Endothelial cell of umbilical vein (primary cell): ENCODE measurements at regions of chr5 and their contacts with region 1.

Region 1: GRCh38 chr5:136132557-136133221 is at the start of gene SMAD5:
- DNase-seq: peak; percentile 97
- H3K4me3 ChIP-seq: peak within 1 kb of the TSS; percentile 72 to 96 (median 83)
- H3K27ac ChIP-seq: peak within 1 kb of the TSS; percentile 78
- H3K4me1 ChIP-seq: peaks cover 15% of the 10 kb centered on the region
- H3K27me3 ChIP-seq: peaks cover 7 to 21% of the 10 kb centered on the region in 2 experiments
- CTCF ChIP-seq: no peak
- POLR2A ChIP-seq: peak; percentile 64
- total RNA-seq, gene SMAD5: 65.4 and 66.0 TPM in 2 replicates

Region 2: DNA sequence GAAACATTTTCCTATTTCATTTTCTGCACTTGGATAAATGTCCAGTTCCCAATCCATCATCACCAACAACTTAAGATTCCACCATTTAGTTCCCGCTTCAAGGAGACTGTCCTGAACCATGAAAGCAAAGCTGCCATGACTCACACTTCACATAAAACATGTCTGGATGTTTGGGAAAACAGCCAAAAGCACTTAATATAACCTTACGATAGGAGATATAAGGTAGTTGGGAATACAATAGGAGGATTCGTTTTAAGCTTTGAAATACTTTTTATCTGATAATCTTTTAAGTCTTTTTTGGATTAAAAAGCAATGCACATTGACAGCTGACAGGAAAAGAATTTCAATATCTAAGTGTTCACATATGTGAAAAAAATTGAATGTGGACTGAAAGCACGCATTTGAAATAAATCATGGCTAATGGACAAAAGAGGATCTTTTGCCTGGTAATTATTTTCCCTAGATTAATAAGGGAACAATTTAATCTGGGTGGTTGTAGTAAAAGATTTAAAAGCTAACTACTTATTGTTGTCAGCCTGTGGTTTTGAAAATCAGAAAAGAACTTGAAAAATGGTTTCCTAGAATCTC is 121.2 kb before region 1 on chr5:
- CTCF ChIA-PET with region 1: no interaction called
- POLR2A ChIA-PET with region 1: no interaction called
- dilution Hi-C with region 1: no loop called
- intact Hi-C with region 1: loop called (anchors 1 kb)
- DNase-seq: peak; percentile 89
- H3K4me3 ChIP-seq: no peak overlapping the region
- H3K27ac ChIP-seq: peak overlapping the region; percentile 65
- H3K4me1 ChIP-seq: peaks cover 19% of the 10 kb centered on the region
- H3K27me3 ChIP-seq: no peaks in the 10 kb centered on the region
- CTCF ChIP-seq: no peak
- POLR2A ChIP-seq: no peak

Region 3: DNA sequence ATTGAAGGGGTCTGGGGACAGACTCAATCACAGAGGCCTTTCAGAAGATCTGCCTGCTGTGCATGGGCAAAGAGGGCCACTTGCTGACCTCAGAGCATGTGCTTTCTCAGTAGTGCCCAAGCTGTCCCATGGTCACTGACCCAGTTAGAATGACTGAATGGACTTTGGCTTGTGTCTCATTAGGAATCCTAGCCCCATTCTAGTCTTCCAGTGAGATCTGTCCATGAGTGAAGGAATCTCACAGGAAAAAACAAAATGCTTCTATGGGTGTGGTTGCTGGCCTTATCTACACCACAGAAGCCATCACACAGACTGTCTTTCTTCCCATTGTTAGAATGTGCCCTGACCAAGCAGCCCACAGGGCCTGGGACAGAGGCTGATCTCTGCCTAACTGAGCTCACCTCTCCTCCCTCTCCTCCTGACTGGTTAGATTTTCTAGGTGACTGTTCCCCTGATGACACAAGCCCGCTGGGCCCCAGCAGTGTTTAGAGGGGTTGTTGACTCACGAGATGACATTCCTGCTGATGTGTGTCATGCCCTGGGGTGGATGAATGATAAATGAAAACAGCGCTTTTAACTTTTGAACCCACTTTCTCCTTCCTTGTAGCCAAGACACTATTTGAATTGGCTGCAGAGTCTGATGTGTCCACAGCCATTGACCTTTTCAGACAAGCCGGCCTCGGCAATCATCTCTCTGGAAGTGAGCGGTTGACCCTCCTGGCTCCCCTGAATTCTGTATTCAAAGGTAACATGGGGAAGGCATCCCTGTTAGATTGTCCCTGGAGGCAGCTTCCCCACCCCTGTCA is 79.2 kb before region 1 on chr5:
- CTCF ChIA-PET with region 1: no interaction called
- POLR2A ChIA-PET with region 1: no interaction called
- dilution Hi-C with region 1: no loop called
- intact Hi-C with region 1: no loop called
- DNase-seq: peak; percentile 77
- H3K4me3 ChIP-seq: no peak overlapping the region
- H3K27ac ChIP-seq: peak overlapping the region; percentile 84
- H3K4me1 ChIP-seq: peaks cover 36% of the 10 kb centered on the region
- H3K27me3 ChIP-seq: no peaks in the 10 kb centered on the region
- CTCF ChIP-seq: no peak
- POLR2A ChIP-seq: peak; percentile 28

Region 4: GRCh38 chr5:136174021-136174659 is 41.5 kb after region 1 on chr5:
- CTCF ChIA-PET with region 1: interaction called, 6 read pairs
- POLR2A ChIA-PET with region 1: no interaction called
- dilution Hi-C with region 1: no loop called
- intact Hi-C with region 1: loop called (anchors 2 kb)
- DNase-seq: peak; percentile 57
- H3K4me3 ChIP-seq: no peak overlapping the region
- H3K27ac ChIP-seq: no peak overlapping the region
- H3K4me1 ChIP-seq: no peaks in the 10 kb centered on the region
- H3K27me3 ChIP-seq: no peaks in the 10 kb centered on the region
- CTCF ChIP-seq: peak; percentile 38 to 54
- POLR2A ChIP-seq: no peak

Region 5: DNA sequence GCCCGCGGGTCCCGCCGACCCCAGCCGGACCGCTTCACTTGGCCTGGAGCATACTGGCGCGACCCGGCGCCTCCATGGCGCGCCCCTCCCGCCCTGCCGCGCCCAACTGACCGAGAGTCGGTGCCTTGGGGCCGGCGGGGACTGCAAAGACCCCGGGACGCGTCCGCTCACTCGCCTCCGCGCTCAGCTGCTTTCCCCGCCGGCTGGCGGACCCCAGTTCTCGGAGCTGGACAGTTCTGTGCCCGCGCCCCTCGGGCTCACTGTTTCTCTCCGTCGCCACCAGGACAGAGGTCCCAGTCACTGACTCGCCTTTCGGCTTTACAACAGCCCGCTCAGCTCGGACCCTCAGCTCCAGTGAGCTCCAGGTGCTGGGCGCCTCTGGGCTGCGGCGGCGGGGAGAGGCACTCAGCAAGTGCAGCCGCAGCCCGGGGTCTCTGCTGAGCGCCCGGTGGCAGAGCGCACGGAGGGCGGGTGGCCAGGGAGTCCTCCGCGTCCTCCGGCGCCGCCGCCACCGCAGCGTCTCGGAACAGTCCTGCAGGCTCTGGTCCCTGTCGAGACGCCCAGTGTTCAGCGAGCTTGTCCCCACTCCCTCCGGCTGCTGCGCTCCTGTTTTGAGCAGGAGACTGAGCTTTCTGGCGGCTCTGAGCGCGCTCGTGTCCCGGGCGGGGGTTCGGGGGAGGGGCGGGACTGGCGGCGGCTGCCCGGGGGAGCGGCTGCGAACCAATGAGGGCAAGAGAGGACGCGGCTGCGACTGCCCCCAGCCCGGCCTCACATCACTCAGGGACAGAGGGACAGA is 60.0 kb after region 1 on chr5 and contains the start of gene SMIM32:
- CTCF ChIA-PET with region 1: no interaction called
- POLR2A ChIA-PET with region 1: no interaction called
- dilution Hi-C with region 1: no loop called
- intact Hi-C with region 1: loop called (anchors 5 kb)
- DNase-seq: peak; percentile 2
- H3K4me3 ChIP-seq: peak within 1 kb of the TSS in 2 of 3 experiments; percentile 10 to 28
- H3K27ac ChIP-seq: no peak within 1 kb of the TSS
- H3K4me1 ChIP-seq: peaks cover 4% of the 10 kb centered on the region
- H3K27me3 ChIP-seq: peaks cover 35 to 43% of the 10 kb centered on the region in 2 experiments
- CTCF ChIP-seq: no peak
- POLR2A ChIP-seq: no peak
- total RNA-seq, gene SMIM32: not detected in 2 replicates

Region 6: GRCh38 chr5:136409000-136409399 is 276.3 kb after region 1 on chr5:
- CTCF ChIA-PET with region 1: no interaction called
- POLR2A ChIA-PET with region 1: no interaction called
- dilution Hi-C with region 1: no loop called
- intact Hi-C with region 1: no loop called
- DNase-seq: no peak
- H3K4me3 ChIP-seq: no peak overlapping the region
- H3K27ac ChIP-seq: no peak overlapping the region
- H3K4me1 ChIP-seq: peaks cover 4% of the 10 kb centered on the region
- H3K27me3 ChIP-seq: peaks cover 1 to 5% of the 10 kb centered on the region in 2 experiments
- CTCF ChIP-seq: no peak
- POLR2A ChIP-seq: no peak